T-cell (primary cell): ENCODE measurements at regions of chr2 and their contacts with region 1.

Region 1: GRCh38 chr2:160429248-160430000 is 64.2 kb downstream of the RBMS1 start:
- DNase-seq: peak in 1 of 35 experiments; percentile 79
- ATAC-seq: peak in 2 of 4 experiments; percentile 29 to 40
- H3K4me3 ChIP-seq: no peak overlapping the region
- H3K4me3 Mint-ChIP-seq: peak overlapping the region in 1 of 3 donors; percentile 81
- H3K27ac ChIP-seq: peak overlapping the region; percentile 75
- H3K27ac Mint-ChIP-seq: peak overlapping the region; percentile 87 to 88
- H3K4me1 ChIP-seq: peaks cover 23 to 57% of the 10 kb centered on the region in 2 experiments
- H3K4me1 Mint-ChIP-seq: peaks cover 63 to 70% (median 69%) of the 10 kb centered on the region in 3 donors
- H3K27me3 ChIP-seq: no peaks in the 10 kb centered on the region
- H3K27me3 Mint-ChIP-seq: no peaks in the 10 kb centered on the region

Region 2: DNA sequence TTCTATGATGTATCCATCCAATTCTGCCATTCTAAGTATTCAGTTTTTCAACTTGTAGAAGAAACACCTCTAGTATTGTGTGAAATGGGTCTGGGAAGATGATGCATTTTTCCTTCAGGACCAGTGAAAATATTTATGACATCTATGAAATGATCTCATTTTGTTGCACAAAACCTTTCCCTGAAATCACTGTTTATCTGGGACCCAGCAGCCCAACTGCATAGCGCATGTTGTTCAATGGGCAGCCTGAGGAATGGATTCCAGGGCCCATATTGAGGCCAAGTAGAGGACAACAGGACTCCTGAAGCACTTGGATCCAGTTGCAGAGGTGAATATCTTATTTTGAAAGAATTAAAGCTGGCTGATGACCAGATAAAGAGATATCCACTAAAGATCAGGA is 56.9 kb after region 1 on chr2:
- CTCF ChIA-PET with region 1: interaction called, 4 to 17 read pairs
- POLR2A ChIA-PET with region 1: interaction called in 1 of 2 experiments, 7 read pairs
- DNase-seq: no peak
- ATAC-seq: no peak
- H3K4me3 ChIP-seq: no peak overlapping the region
- H3K4me3 Mint-ChIP-seq: no peak overlapping the region
- H3K27ac ChIP-seq: no peak overlapping the region
- H3K27ac Mint-ChIP-seq: peak overlapping the region; percentile 86 to 93
- H3K4me1 ChIP-seq: peaks cover 19 to 75% of the 10 kb centered on the region in 2 experiments
- H3K4me1 Mint-ChIP-seq: peaks cover 76 to 82% (median 80%) of the 10 kb centered on the region in 3 donors
- H3K27me3 ChIP-seq: no peaks in the 10 kb centered on the region
- H3K27me3 Mint-ChIP-seq: no peaks in the 10 kb centered on the region

Region 3: DNA sequence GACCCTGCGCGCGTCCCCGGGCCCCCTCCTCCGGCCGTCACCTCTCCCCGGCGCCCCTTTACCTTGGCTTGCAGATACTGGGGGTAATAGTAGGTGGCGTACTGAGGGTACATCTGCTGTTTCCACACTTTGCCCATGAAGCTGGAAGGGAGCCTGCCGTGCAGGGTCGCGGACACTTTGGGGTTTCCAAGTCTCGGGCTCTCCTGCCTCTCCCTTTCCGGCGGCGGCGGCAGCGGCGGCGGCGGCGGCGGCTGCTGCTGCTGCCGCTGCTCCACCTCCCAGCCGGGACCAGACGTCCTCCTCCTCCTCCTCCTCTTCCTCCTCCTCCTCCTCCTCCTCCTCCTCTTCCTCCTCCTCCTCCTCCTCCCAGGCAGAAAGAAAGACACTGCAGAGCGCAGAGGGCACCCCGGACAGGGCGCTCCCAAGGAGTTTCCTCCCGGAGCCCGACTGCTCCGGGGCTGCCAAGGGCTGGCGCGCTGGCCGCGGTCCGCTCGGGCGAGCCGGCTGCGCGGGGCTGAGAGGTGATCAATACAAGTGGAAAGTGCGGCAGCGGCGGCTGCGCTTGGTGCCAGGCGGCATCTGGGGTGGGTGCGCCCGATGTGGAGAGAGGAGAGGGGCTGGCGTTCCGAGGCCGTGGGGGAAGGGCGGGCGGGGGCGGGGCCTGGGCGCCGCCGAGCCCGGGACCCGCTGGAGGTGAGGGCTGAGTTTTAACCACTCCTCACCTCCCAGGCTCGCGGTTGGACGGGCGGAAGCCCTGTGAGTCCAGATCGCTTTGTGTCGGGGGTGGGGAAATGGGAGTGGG is 64.0 kb after region 1 on chr2 and contains the start of gene RBMS1:
- CTCF ChIA-PET with region 1: interaction called, 8 to 17 read pairs
- POLR2A ChIA-PET with region 1: interaction called in 1 of 2 experiments, 7 read pairs
- DNase-seq: peak in 34 of 35 experiments; percentile 14 to 69 (median 36)
- ATAC-seq: peak; percentile 49 to 63 (median 56)
- H3K4me3 ChIP-seq: peak within 1 kb of the TSS; percentile 70 to 71
- H3K4me3 Mint-ChIP-seq: peak within 1 kb of the TSS; percentile 92 to 97 (median 92)
- H3K27ac ChIP-seq: peak within 1 kb of the TSS; percentile 78
- H3K27ac Mint-ChIP-seq: peak within 1 kb of the TSS; percentile 92 to 96
- H3K4me1 ChIP-seq: peaks cover 11 to 26% of the 10 kb centered on the region in 2 experiments
- H3K4me1 Mint-ChIP-seq: peaks cover 39 to 44% (median 41%) of the 10 kb centered on the region in 3 donors
- H3K27me3 ChIP-seq: no peaks in the 10 kb centered on the region
- H3K27me3 Mint-ChIP-seq: no peaks in the 10 kb centered on the region
- total RNA-seq, gene RBMS1: 94.2 to 137 (median 105) TPM